Activated CD4-positive, alpha-beta T cell treated with anti-CD3 and anti-CD28 coated beads for 36 hours (primary cell): ENCODE measurements at regions of chr17 and their contacts with region 1.

Region 1: DNA sequence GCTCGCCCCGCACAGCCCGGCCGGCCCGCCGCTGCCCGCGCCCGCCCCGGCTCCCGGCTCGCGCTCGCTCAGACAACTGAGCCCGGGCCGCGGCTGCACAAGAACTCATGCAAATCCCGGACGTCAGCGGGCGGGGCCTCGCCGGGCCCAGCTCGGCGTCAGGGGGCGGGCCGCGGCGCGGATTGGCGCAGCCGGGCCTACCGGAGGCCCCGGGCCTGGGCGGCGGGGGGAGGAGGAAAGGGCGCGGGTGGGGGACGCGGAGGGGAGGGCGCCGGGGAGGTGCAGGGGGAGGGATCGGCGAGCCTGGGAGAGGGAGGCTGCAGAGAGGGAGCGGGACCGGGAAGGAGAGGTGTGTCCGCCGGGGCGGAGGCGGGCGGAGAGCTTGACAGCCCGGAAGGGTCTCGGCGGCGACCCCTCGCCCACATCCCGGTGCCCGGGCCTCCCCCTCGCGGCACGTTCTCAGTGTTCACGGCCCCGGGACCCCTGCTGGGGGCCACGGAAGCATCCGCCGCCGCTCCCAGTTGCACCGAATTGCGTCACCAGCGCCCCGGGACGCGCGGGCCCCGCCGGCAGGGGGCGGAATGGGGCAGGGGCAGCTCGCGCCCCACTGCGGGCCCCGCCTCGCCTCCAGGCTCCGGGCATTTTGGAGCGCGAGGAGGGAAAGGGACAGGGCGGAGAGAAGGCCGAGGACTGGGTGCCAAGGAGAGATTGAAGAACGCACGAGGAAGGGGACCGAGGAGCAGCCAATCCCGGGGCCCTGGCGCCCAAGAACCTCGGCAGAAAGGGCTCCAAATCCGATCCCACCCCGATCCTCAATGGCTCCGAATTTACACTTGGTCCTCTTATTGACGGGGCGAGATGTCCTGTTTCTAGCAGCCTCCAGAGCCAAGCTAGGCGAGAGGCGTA is at the start of gene CBX4:
- DNase-seq: peak; percentile 96
- ATAC-seq: peak; percentile 80
- H3K4me3 Mint-ChIP-seq: peak within 1 kb of the TSS; percentile 92
- H3K27ac Mint-ChIP-seq: peak within 1 kb of the TSS; percentile 82
- H3K4me1 Mint-ChIP-seq: peaks cover 49% of the 10 kb centered on the region
- H3K27me3 Mint-ChIP-seq: peaks cover 29% of the 10 kb centered on the region
- total RNA-seq, gene CBX4: 14.9 to 18.5 TPM

Region 2: DNA sequence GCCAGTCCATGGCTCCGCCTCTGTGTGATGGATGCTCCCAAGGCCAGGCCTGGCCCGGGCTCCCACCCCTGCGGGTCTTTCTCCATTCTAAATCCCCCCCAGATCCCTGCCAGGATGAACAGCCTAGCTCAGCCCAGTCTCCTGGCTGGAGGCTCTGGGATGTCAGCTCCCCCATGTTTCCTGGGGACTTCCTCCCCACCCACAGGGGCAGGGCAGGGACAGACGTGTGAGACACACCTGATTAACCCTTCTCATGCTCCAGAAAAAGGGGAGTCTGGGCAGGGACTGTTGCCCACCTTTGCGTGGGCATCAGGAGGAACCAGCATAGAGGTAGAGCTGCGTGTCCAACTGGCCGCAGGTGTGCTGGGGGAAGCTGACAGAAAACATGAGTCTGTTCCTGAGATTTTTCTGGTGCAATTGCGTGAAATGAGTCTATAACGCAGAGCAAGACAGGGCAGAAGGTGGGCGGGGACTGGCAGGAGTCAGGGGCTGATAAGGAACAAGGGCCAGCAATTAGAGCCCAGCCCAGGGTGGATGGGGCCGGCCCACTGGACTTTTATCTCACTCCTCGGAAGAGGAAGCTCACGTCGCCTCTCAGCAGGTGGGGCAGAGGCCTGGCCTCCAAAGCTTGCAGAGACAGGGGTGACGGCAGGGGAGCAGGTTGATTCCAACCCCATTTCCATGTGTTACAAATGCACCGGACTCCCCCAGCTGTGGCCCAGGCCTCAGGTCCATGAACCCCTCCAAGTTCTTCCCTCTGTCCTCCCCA is 467.0 kb before region 1 on chr17:
- CTCF ChIA-PET with region 1: no interaction called
- POLR2A ChIA-PET with region 1: no interaction called
- intact Hi-C with region 1: no loop called
- DNase-seq: no peak
- ATAC-seq: no peak
- H3K4me3 Mint-ChIP-seq: no peak overlapping the region
- H3K27ac Mint-ChIP-seq: no peak overlapping the region
- H3K4me1 Mint-ChIP-seq: no peaks in the 10 kb centered on the region
- H3K27me3 Mint-ChIP-seq: peaks cover 14% of the 10 kb centered on the region

Region 3: DNA sequence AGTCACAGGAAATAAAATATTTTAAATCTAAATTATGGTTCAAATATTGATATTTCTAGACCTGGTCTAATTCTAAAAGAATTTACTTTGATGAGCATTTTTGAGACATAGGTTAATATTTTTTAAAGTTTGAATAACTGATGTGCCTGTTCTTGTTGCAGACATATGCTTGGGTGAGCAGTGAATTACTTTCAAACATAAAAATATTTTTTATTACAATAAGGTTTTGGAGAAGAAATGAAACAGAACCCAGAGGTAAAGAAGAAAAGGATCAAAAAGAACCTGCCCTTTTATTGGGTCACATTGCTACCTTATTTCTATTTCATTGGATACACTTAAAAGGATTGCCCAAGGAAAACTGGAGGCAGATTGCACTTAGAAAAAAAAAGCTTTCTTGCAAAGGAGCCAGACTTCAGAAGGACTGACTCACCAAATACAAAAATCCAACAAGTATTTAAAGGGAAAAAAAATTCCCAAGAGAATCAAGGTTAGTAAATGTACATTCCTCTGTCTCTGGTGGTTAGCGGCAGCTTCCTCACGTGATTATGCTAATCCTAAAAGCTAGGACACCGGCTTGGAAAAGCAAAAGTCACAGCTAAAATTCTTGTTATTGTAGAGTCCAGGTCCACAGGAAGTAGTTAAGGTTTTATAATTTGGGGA is 90.3 kb before region 1 on chr17:
- CTCF ChIA-PET with region 1: interaction called, 4 read pairs
- POLR2A ChIA-PET with region 1: interaction called, 3 read pairs
- intact Hi-C with region 1: loop called (anchors 1 to 10 kb)
- DNase-seq: no peak
- ATAC-seq: no peak
- H3K4me3 Mint-ChIP-seq: no peak overlapping the region
- H3K27ac Mint-ChIP-seq: no peak overlapping the region
- H3K4me1 Mint-ChIP-seq: peaks cover 25% of the 10 kb centered on the region
- H3K27me3 Mint-ChIP-seq: peaks cover 39% of the 10 kb centered on the region

Region 4: GRCh38 chr17:79789534-79790353 is 49.9 kb before region 1 on chr17:
- CTCF ChIA-PET with region 1: interaction called, 4 read pairs
- POLR2A ChIA-PET with region 1: no interaction called
- intact Hi-C with region 1: loop called in 1 of 2 experiments (anchors 1 kb)
- DNase-seq: peak; percentile 56
- ATAC-seq: peak; percentile 33
- H3K4me3 Mint-ChIP-seq: no peak overlapping the region
- H3K27ac Mint-ChIP-seq: no peak overlapping the region
- H3K4me1 Mint-ChIP-seq: peaks cover 4% of the 10 kb centered on the region
- H3K27me3 Mint-ChIP-seq: peaks cover 49% of the 10 kb centered on the region

Region 5: DNA sequence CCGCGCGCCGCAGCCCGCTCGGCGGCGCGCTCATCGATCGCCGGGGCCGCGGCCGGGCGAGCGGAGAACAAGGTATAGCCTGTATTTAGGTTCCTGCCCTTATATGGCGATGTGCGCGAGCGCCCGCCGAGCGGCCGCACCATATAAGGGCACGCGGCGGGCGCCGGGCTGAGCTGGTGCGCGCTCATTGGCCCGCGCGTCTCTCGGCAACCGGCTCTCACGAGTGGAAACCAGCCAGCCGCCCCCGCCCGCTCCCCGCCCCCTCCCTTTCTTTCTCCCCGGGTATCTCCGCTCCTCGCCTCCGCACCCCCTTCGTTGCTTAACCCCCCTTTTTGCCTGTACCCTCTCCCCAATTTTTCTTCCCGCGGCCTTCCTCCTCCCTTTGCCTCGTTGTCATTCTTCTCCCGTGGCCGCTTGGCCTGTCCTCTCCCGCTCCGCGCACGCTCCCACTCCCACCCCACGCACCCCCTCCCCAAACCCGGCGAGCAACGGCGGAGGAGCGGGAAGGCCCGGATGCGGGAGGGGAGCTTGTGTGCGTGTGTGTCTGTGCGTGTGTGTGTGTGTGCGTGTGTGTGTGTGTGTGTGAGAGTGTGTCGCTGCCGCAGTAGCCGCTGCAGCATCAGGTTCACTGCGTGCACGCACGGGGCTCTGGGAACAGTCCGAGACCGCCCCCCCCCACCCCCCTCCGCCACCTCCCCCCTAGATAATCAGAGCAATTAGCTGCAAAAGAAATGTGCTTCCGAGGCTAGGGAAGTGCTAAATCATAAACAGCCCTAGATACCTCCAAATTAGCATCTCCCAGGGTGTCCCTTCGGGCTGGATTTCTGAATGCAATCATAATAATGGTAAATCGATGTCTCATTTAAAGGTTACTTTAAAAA is 29.2 kb before region 1 on chr17:
- CTCF ChIA-PET with region 1: interaction called, 14 read pairs
- POLR2A ChIA-PET with region 1: interaction called, 6 read pairs
- intact Hi-C with region 1: loop called (anchors 1 kb)
- DNase-seq: peak; percentile 90
- ATAC-seq: peak; percentile 90
- H3K4me3 Mint-ChIP-seq: peak overlapping the region; percentile 18
- H3K27ac Mint-ChIP-seq: no peak overlapping the region
- H3K4me1 Mint-ChIP-seq: peaks cover 39% of the 10 kb centered on the region
- H3K27me3 Mint-ChIP-seq: peaks cover 59% of the 10 kb centered on the region

Region 6: GRCh38 chr17:80886641-80887573 is 1047.3 kb after region 1 on chr17:
- CTCF ChIA-PET with region 1: no interaction called
- POLR2A ChIA-PET with region 1: interaction called, 11 read pairs
- intact Hi-C with region 1: no loop called
- DNase-seq: no peak
- ATAC-seq: no peak
- H3K4me3 Mint-ChIP-seq: no peak overlapping the region
- H3K27ac Mint-ChIP-seq: peak overlapping the region; percentile 47
- H3K4me1 Mint-ChIP-seq: peaks cover 30% of the 10 kb centered on the region
- H3K27me3 Mint-ChIP-seq: no peaks in the 10 kb centered on the region